Activated naive CD4-positive, alpha-beta T cell treated with anti-CD3 and anti-CD28 coated beads, Interleukin-2, amount 10 ng/mL, durations not matched to agents 7 days and 5 days (primary cell): ENCODE measurements at regions of chr11 and their contacts with region 1.

Region 1: GRCh38 chr11:59158206-59159068 is 13.5 kb upstream of the DTX4 start:
- DNase-seq: peak; percentile 78
- H3K4me3 Mint-ChIP-seq: no peak overlapping the region
- H3K27ac Mint-ChIP-seq: no peak overlapping the region
- H3K4me1 Mint-ChIP-seq: peaks cover 9% of the 10 kb centered on the region
- H3K27me3 Mint-ChIP-seq: peaks cover 5% of the 10 kb centered on the region

Region 2: GRCh38 chr11:58845366-58845765 is 313.1 kb before region 1 on chr11:
- CTCF ChIA-PET with region 1: no interaction called
- DNase-seq: no peak
- H3K4me3 Mint-ChIP-seq: no peak overlapping the region
- H3K27ac Mint-ChIP-seq: no peak overlapping the region
- H3K4me1 Mint-ChIP-seq: no peaks in the 10 kb centered on the region
- H3K27me3 Mint-ChIP-seq: peaks cover 4% of the 10 kb centered on the region

Region 3: GRCh38 chr11:59053387-59053786 is 105.0 kb before region 1 on chr11:
- CTCF ChIA-PET with region 1: interaction called, 19 read pairs
- DNase-seq: peak; percentile 87
- H3K4me3 Mint-ChIP-seq: no peak overlapping the region
- H3K27ac Mint-ChIP-seq: no peak overlapping the region
- H3K4me1 Mint-ChIP-seq: peaks cover 7% of the 10 kb centered on the region
- H3K27me3 Mint-ChIP-seq: peaks cover 14% of the 10 kb centered on the region

Region 4: DNA sequence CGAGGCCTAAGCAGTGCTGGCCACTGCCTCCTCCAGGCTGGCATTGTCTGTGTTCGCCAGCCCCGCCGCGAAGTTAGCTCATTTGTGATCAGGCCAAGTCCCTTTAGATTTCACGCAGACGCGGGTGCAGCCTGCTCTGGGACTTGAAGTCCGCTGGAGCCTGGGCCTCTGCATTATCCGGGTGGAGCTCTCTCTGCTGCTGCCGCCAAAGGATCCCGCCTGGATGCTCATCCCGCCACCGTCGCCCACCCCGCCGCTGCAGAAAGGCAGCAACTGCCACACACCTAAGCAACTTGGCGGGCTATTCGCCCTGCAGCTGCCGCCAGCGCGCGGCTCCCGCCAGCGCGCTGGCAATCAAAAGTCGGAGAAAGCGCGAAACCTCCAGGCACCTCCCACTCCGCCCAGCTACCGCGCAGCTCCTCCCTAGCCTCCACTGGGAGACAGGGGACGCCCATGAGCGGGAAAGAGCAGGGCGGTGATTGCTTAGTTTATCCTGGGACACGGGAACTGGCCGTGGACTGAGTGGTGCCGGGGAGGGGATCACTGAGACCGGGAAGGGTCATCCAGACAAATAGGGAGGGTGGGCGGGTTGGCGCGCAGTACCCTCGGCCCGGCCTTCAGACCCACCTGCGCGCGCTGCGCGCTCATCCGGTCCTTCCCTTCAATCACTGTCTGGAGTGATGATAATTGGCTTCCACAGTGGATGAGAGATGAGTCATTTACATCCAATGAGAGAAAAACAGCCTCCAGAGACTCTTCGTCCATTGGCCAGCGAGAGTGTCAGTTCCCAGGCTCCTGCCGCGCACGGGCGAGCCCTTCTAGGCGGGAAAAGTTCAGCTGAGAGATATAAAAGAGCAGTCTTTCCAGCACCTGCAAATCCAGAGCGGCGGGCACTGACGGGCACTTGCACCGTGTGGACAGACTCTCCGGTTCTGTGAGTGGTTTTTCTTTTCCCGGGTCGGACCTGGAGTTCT is 51.8 kb before region 1 on chr11 and contains the start of gene FAM111B:
- CTCF ChIA-PET with region 1: interaction called, 12 read pairs
- DNase-seq: peak; percentile 89
- H3K4me3 Mint-ChIP-seq: peak within 1 kb of the TSS; percentile 94
- H3K27ac Mint-ChIP-seq: peak within 1 kb of the TSS; percentile 90
- H3K4me1 Mint-ChIP-seq: peaks cover 77% of the 10 kb centered on the region
- H3K27me3 Mint-ChIP-seq: peaks cover 20% of the 10 kb centered on the region

Region 5: GRCh38 chr11:59135648-59136461 is 22.6 kb before region 1 on chr11:
- CTCF ChIA-PET with region 1: interaction called, 113 read pairs
- DNase-seq: peak; percentile 92
- H3K4me3 Mint-ChIP-seq: no peak overlapping the region
- H3K27ac Mint-ChIP-seq: no peak overlapping the region
- H3K4me1 Mint-ChIP-seq: peaks cover 17% of the 10 kb centered on the region
- H3K27me3 Mint-ChIP-seq: no peaks in the 10 kb centered on the region

Region 6: GRCh38 chr11:59142530-59143507 is 15.6 kb before region 1 on chr11 and contains the start of gene FAM111A:
- CTCF ChIA-PET with region 1: interaction called, 113 read pairs
- DNase-seq: peak; percentile 96
- H3K4me3 Mint-ChIP-seq: peak within 1 kb of the TSS; percentile 90
- H3K27ac Mint-ChIP-seq: peak within 1 kb of the TSS; percentile 97
- H3K4me1 Mint-ChIP-seq: peaks cover 64% of the 10 kb centered on the region
- H3K27me3 Mint-ChIP-seq: no peaks in the 10 kb centered on the region

Region 7: DNA sequence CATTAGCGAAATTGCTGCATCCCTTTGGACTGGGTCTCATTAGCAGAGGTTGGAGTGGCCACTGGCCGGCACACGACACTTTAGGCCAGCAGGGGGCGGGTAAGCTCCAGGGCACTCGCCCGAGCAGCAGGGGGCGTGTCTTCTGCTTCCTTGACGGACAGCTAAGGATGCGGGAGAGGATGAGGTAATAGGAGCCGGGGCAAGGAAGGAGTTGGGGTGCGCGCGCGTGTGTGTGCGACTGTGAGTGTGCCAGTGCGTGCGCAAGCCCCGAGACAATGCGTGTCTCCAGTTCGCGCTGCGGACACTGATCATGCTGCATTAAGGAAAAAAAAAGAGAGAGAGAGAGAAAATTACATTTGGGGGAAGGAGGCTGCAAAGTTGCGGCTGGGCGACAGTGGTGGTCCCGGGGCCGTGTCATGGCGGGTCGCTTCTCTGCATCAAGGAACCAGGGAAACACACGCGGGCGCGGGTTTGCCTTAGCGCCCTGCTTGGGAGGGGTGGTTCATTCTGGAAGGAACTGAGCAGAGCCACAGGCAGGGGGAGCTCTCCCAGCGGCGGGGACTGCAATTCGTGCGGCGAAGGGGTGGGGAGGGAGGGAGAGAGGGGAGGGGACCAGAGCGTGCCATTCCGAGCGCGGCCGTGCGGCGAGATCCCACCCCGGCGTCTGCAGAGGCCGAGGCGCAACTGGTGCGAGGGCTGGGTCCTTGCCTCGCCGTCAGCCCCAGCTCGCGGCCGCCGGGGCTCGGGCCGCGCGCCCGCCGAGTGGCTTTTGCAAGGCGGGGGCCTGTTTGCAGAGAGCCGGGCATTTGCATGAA is 13.3 kb after region 1 on chr11 and contains the start of gene DTX4:
- CTCF ChIA-PET with region 1: interaction called, 28 read pairs
- DNase-seq: peak; percentile 94
- H3K4me3 Mint-ChIP-seq: peak within 1 kb of the TSS; percentile 79
- H3K27ac Mint-ChIP-seq: peak within 1 kb of the TSS; percentile 13
- H3K4me1 Mint-ChIP-seq: peaks cover 7% of the 10 kb centered on the region
- H3K27me3 Mint-ChIP-seq: peaks cover 35% of the 10 kb centered on the region

Region 8: GRCh38 chr11:59292611-59293010 is 134.2 kb after region 1 on chr11:
- CTCF ChIA-PET with region 1: no interaction called
- DNase-seq: no peak
- H3K4me3 Mint-ChIP-seq: no peak overlapping the region
- H3K27ac Mint-ChIP-seq: no peak overlapping the region
- H3K4me1 Mint-ChIP-seq: no peaks in the 10 kb centered on the region
- H3K27me3 Mint-ChIP-seq: peaks cover 14% of the 10 kb centered on the region